Activated CD4-positive, alpha-beta memory T cell treated with anti-CD3 and anti-CD28 coated beads, Interleukin-2, amount 10 ng/mL, durations not matched to agents 7 days and 5 days (primary cell): ENCODE measurements at regions of chr17 and their contacts with region 1.

Region 1: GRCh38 chr17:21284319-21285163 is at the start of gene MAP2K3:
- DNase-seq: peak; percentile 98
- H3K4me3 Mint-ChIP-seq: peak within 1 kb of the TSS; percentile 97
- H3K27ac Mint-ChIP-seq: peak within 1 kb of the TSS; percentile 92
- H3K4me1 Mint-ChIP-seq: peaks cover 52% of the 10 kb centered on the region
- H3K27me3 Mint-ChIP-seq: no peaks in the 10 kb centered on the region
- total RNA-seq, gene MAP2K3: 74.2 to 76.0 TPM

Region 2: GRCh38 chr17:21126645-21127510 is 157.7 kb before region 1 on chr17 and contains the start of gene DHRS7B:
- CTCF ChIA-PET with region 1: interaction called, 3 read pairs
- POLR2A ChIA-PET with region 1: interaction called, 11 read pairs
- DNase-seq: peak; percentile 97
- H3K4me3 Mint-ChIP-seq: peak within 1 kb of the TSS; percentile 89
- H3K27ac Mint-ChIP-seq: peak within 1 kb of the TSS; percentile 86
- H3K4me1 Mint-ChIP-seq: peaks cover 35% of the 10 kb centered on the region
- H3K27me3 Mint-ChIP-seq: no peaks in the 10 kb centered on the region
- total RNA-seq, gene DHRS7B: 12.1 to 15.3 TPM

Region 3: DNA sequence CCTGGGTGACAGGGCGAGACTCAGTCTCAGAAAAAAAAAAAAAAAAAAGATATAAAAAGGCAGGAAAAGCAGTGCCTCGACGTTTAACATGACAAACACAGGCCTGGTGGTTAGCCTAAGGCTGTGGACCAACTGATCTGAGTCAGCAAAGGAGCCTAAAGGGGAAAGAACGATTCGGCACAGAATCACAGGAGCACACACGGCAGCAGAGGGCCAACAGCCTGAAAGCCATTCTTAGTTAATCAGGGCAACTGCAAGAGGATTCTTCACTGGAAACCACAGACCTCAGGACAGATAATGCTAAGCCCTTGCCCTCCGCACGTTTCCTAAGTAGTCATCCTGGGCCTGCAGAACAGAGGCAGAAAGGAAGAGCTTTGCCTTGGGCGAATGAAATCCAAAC is 85.2 kb before region 1 on chr17:
- CTCF ChIA-PET with region 1: no interaction called
- POLR2A ChIA-PET with region 1: no interaction called
- DNase-seq: no peak
- H3K4me3 Mint-ChIP-seq: no peak overlapping the region
- H3K27ac Mint-ChIP-seq: no peak overlapping the region
- H3K4me1 Mint-ChIP-seq: peaks cover 13% of the 10 kb centered on the region
- H3K27me3 Mint-ChIP-seq: no peaks in the 10 kb centered on the region

Region 4: DNA sequence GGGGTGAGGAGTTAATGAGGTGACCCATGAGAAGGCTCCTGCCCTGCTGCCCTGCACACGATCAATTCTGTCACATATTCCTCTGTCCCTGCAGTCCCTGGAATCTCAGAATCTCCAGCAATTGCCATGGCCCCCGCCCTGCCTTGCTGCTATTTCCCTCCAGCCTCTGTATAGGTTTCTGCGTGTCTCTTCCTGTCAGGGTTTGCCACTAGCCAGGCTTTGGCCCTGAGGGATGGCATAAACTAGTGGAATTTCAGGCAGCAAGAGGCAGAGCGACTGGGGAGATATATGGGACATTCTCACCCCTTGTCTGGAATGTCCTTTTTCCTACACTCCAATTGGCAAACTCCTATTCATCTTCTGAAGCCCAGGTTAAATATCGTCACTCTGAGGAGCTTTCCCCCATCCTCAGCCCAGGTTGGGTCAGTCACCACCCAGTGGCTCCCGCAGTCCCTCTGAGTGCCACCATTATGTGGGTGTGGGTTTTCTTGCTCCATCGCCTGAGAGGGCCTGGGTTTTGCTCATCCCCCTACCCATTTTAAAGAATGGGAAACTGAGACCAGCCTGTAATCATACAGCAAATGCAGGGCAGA is 15.8 kb before region 1 on chr17:
- CTCF ChIA-PET with region 1: interaction called, 5 read pairs
- POLR2A ChIA-PET with region 1: interaction called, 14 read pairs
- DNase-seq: no peak
- H3K4me3 Mint-ChIP-seq: no peak overlapping the region
- H3K27ac Mint-ChIP-seq: peak overlapping the region; percentile 79
- H3K4me1 Mint-ChIP-seq: peaks cover 27% of the 10 kb centered on the region
- H3K27me3 Mint-ChIP-seq: no peaks in the 10 kb centered on the region